ENCODE measurements at regions of chr4 and their contacts with region 1.

Region 1: DNA sequence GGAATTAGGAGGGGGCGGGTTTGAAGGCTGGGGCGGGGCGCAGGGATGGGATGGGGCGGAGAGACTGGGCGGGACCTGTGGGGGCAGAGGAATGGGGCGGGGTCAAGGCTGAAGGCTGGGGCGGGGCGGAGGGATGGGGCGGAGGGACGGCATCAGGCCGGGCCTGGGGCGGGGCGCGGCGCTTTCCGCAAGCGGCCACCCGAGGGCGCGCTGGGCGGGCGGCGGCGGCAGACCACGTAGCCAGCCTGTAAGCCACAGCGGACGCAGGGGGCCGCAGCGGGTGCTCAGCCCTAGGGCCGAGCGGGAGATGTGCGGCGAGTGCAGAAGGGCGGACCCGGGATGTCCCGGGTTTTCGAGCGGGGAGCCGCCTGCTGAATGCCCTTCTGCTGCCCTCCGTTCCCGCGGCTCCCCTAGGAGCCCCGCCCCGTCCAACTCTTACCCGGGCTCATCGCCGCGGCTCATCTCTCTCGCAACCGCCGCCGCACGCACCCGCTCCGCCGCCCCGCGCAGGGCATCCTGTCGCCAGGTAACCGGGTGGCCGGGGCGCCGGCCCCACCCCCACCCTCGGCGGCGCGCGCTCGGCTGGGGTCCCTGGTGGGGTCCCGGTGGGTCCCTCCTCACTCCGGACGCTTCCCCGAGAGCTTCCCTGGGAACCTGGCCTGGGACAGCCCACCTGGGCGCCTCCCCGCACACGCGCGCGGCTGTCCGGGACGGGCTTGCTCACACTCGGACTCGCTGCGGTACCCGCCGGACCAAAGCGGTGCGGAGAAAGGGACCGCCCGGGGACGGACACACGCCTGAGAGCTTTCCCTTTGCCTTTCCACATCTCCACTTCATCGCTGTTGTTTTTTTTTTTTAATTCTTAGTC is at the start of gene CCDC110:
- DNase-seq: peak; percentile 97
- H3K4me3 ChIP-seq: peak within 1 kb of the TSS; percentile 85
- H3K27ac ChIP-seq: peak within 1 kb of the TSS; percentile 40
- H3K4me1 ChIP-seq: no peaks in the 10 kb centered on the region
- H3K27me3 ChIP-seq: no peaks in the 10 kb centered on the region
- CTCF ChIP-seq: peak; percentile 57
- total RNA-seq, gene CCDC110: 3.6 TPM

Region 2: GRCh38 chr4:185219551-185220344 is 251.7 kb before region 1 on chr4:
- intact Hi-C with region 1: no loop called
- DNase-seq: peak; percentile 64
- H3K4me3 ChIP-seq: no peak overlapping the region
- H3K27ac ChIP-seq: no peak overlapping the region
- H3K4me1 ChIP-seq: no peaks in the 10 kb centered on the region
- H3K27me3 ChIP-seq: no peaks in the 10 kb centered on the region
- CTCF ChIP-seq: no peak

Region 3: GRCh38 chr4:185425647-185426352 is 45.7 kb before region 1 on chr4 and contains the start of gene UFSP2:
- intact Hi-C with region 1: loop called (anchors 5 kb)
- DNase-seq: peak; percentile 89
- H3K4me3 ChIP-seq: peak within 1 kb of the TSS; percentile 79
- H3K27ac ChIP-seq: peak within 1 kb of the TSS; percentile 86
- H3K4me1 ChIP-seq: no peaks in the 10 kb centered on the region
- H3K27me3 ChIP-seq: no peaks in the 10 kb centered on the region
- CTCF ChIP-seq: no peak
- total RNA-seq, gene UFSP2: 22.0 to 23.5 TPM

Region 4: DNA sequence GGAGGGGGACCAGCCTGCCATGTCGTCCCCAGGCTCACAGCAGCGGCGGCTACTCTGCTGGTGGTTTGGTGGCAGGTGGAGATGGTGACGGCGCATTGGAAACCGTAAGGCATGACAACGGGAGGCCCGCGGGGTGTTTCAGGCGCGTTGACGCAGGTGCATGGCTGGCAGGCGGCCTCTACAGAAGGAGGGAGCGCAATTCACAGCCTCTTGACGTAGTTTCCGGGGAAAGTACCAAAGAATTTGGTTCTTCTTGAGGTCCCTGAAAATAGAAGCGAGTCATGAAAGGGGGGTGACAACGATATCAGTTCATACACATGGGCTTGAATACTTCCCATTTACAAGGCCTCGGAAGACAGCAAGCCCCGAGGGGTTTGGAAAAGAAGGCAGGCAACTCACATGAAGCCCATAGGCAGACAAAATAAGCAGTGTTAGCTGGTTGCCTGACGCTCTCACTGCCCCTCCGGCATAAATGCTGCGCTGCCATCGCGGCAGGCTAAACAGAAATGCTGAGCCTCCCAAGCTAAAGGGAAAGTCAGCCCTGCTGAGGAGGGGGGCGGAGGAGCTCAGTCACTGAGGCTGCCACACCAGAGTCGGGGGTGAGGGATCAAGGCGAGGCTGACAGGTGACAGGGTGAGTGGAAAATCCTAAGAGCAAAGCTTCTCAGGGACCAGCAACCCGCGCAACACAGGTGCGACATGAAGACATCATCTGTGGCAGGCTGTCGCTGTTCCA is 116.1 kb after region 1 on chr4:
- intact Hi-C with region 1: no loop called
- DNase-seq: no peak
- H3K4me3 ChIP-seq: no peak overlapping the region
- H3K27ac ChIP-seq: no peak overlapping the region
- H3K4me1 ChIP-seq: no peaks in the 10 kb centered on the region
- H3K27me3 ChIP-seq: no peaks in the 10 kb centered on the region
- CTCF ChIP-seq: no peak

Region 5: GRCh38 chr4:185597532-185598188 is 126.2 kb after region 1 on chr4:
- intact Hi-C with region 1: loop called (anchors 5 kb)
- DNase-seq: peak; percentile 73
- H3K4me3 ChIP-seq: no peak overlapping the region
- H3K27ac ChIP-seq: no peak overlapping the region
- H3K4me1 ChIP-seq: no peaks in the 10 kb centered on the region
- H3K27me3 ChIP-seq: no peaks in the 10 kb centered on the region
- CTCF ChIP-seq: peak; percentile 100

Region 6: GRCh38 chr4:185708348-185708747 is 236.9 kb after region 1 on chr4:
- intact Hi-C with region 1: no loop called
- DNase-seq: no peak
- H3K4me3 ChIP-seq: no peak overlapping the region
- H3K27ac ChIP-seq: no peak overlapping the region
- H3K4me1 ChIP-seq: no peaks in the 10 kb centered on the region
- H3K27me3 ChIP-seq: no peaks in the 10 kb centered on the region
- CTCF ChIP-seq: no peak